ENCODE measurements at regions of chr3 and their contacts with region 1.

Region 1: DNA sequence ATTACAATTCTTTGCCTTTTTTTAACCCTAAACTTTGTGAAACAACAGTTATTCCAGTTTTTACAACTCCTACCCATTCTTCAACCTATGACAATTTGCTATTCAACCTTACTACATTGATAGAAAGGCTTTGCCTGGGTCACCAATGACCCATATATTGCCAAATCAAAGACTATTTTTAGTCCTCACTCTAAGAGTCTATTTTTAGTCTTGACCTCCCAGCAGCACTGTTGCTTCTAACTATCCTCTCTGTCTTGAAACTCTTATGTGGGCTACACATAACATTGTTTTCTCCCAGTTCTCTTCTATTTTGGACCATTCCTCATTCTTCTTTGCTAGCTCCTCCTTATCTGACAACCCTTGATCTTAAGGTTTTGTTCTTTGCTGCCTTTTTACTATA is 71.4 kb downstream of the C3orf80 start:
- DNase-seq: no peak
- ATAC-seq: peak; percentile 91

Region 2: GRCh38 chr3:159783777-159784743 is 512.5 kb before region 1 on chr3:
- intact Hi-C with region 1: loop called (anchors 5 kb)
- DNase-seq: no peak
- ATAC-seq: no peak

Region 3: DNA sequence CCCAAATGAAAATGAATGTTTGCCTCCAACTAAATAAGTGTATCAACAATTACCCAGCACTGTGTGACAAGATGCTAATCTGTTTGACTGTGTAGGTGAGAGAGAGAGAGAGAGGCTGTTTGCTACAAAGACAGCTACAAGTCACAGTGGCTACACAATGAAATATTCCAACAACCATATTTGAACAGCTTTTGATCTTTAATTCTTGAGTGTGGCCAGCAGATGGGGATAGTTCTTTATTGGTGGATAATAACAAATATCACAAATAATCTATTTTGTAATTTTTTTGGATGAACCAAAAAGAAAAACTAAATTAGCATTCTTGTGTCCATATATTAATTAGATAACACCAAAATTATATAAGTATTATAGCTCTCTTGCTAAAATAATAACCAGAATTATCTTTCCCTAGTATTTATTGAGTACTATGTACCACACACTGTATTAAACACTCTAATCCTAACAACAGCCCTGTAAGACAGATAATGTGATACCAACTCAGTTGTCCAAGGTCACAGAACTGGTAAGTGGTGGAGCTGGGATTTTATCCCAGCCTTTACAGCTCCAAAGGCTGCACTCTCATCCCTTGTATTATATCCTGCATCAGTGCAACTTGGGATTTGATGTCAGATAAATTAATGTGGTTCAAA is 133.2 kb before region 1 on chr3:
- intact Hi-C with region 1: no loop called
- DNase-seq: no peak
- ATAC-seq: no peak

Measured in left ventricle myocardium superior (tissue), 1 donor.